ENCODE measurements at regions of chr16 and their contacts with region 1.

Region 1: GRCh38 chr16:84617791-84618580 is at the start of gene COTL1:
- DNase-seq: peak; percentile 90
- H3K4me3 Mint-ChIP-seq: peak within 1 kb of the TSS; percentile 92
- H3K27ac Mint-ChIP-seq: peak within 1 kb of the TSS; percentile 76
- H3K4me1 Mint-ChIP-seq: peaks cover 45% of the 10 kb centered on the region
- H3K27me3 Mint-ChIP-seq: peaks cover 6% of the 10 kb centered on the region
- total RNA-seq, gene COTL1: 478 and 483 TPM in 2 replicates

Region 2: GRCh38 chr16:84511180-84511824 is 106.7 kb before region 1 on chr16:
- intact Hi-C with region 1: loop called (anchors 1 kb)
- DNase-seq: peak; percentile 75
- H3K4me3 Mint-ChIP-seq: no peak overlapping the region
- H3K27ac Mint-ChIP-seq: peak overlapping the region; percentile 74
- H3K4me1 Mint-ChIP-seq: peaks cover 68% of the 10 kb centered on the region
- H3K27me3 Mint-ChIP-seq: no peaks in the 10 kb centered on the region

Region 3: GRCh38 chr16:84599521-84600202 is 18.3 kb before region 1 on chr16:
- intact Hi-C with region 1: loop called (anchors 1 kb)
- DNase-seq: peak; percentile 55
- H3K4me3 Mint-ChIP-seq: peak overlapping the region; percentile 78
- H3K27ac Mint-ChIP-seq: peak overlapping the region; percentile 97
- H3K4me1 Mint-ChIP-seq: peaks cover 82% of the 10 kb centered on the region
- H3K27me3 Mint-ChIP-seq: no peaks in the 10 kb centered on the region

Region 4: GRCh38 chr16:84650062-84650991 is 32.3 kb after region 1 on chr16:
- intact Hi-C with region 1: loop called (anchors 2 kb)
- DNase-seq: no peak
- H3K4me3 Mint-ChIP-seq: peak overlapping the region; percentile 70
- H3K27ac Mint-ChIP-seq: peak overlapping the region; percentile 42
- H3K4me1 Mint-ChIP-seq: peaks cover 45% of the 10 kb centered on the region
- H3K27me3 Mint-ChIP-seq: peaks cover 11% of the 10 kb centered on the region

Region 5: GRCh38 chr16:84864326-84864955 is 246.5 kb after region 1 on chr16:
- intact Hi-C with region 1: no loop called
- DNase-seq: no peak
- H3K4me3 Mint-ChIP-seq: no peak overlapping the region
- H3K27ac Mint-ChIP-seq: no peak overlapping the region
- H3K4me1 Mint-ChIP-seq: no peaks in the 10 kb centered on the region
- H3K27me3 Mint-ChIP-seq: no peaks in the 10 kb centered on the region

Region 6: GRCh38 chr16:84952335-84953189 is 334.6 kb after region 1 on chr16:
- intact Hi-C with region 1: loop called (anchors 2 kb)
- DNase-seq: peak; percentile 59
- H3K4me3 Mint-ChIP-seq: no peak overlapping the region
- H3K27ac Mint-ChIP-seq: no peak overlapping the region
- H3K4me1 Mint-ChIP-seq: no peaks in the 10 kb centered on the region
- H3K27me3 Mint-ChIP-seq: no peaks in the 10 kb centered on the region

Measured in activated T-helper 2 cell treated with anti-CD3 and anti-CD28 coated beads, Interferon-gamma antibody, Interleukin-2, Interleukin-4, amounts not matched to agents 10 μg/mL and 5 μg/mL and 100 μg/mL, durations not matched to agents 14 hours and 24 hours and 36 hours (primary cell).